ENCODE measurements at regions of chr5 and their contacts with region 1.

Region 1: DNA sequence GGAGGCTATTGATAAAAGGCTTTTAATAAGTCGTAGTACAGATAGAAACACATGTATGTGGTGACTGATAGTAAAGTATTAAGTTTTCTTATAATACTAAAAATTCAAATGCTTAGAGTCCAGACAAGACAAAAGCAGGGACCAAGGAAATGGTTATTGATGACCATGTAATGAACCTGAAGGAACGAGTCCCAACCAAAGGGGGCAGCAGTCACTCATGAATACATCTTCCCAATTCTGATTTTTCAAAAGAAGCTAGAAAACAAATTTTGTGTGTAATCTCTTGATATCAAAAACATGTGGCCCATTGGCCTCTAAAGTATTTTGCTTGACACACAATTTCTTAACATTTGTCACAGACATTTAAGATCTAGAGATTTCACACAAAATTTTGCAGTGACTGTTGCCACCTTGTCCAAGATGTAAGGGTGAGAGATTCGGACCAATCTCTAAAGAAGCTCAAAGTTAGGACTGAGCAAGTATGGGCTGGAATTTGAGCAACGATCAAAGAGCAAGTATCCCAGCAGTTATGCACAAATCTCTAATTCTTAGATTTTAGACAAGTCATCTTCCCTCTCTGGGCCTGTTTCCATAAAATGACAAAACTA is 66.8 kb downstream of the ARL15 start:
- DNase-seq: peak; percentile 52
- H3K4me3 Mint-ChIP-seq: no peak overlapping the region
- H3K27ac Mint-ChIP-seq: no peak overlapping the region
- H3K4me1 Mint-ChIP-seq: peaks cover 12% of the 10 kb centered on the region
- H3K27me3 Mint-ChIP-seq: no peaks in the 10 kb centered on the region

Region 2: GRCh38 chr5:54254482-54255198 is 11.1 kb after region 1 on chr5:
- CTCF ChIA-PET with region 1: interaction called, 12 read pairs
- intact Hi-C with region 1: no loop called
- DNase-seq: no peak
- H3K4me3 Mint-ChIP-seq: no peak overlapping the region
- H3K27ac Mint-ChIP-seq: no peak overlapping the region
- H3K4me1 Mint-ChIP-seq: peaks cover 26% of the 10 kb centered on the region
- H3K27me3 Mint-ChIP-seq: no peaks in the 10 kb centered on the region

Region 3: DNA sequence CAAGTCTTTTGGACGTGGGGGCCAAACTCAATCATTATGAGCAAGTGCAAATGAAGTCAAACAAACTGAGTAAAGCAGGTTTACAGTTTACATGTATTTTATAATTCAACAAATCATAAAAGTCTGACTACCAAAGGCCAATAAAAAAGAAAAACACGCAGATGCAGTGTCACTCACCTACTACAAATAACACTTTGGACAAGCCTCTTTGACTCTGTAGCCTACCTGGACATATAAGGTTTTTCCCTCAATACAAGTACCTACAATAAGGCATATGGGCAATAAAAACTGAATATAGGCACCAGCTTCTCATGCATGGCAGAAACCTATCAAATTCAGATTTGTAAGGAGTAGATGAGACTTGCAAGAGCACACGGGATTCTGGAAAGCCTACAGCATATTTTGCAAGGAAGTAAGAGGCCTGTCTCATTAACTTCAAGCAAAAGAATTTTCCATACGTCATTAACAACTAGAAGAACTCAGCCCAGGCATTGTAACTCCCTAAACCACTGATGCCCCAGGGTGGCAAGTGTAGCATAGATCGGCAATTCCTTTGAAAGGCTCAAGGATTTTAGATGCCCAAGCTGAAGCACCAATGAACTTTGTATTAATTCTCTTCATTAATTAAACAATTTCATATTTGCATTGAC is 45.1 kb after region 1 on chr5:
- CTCF ChIA-PET with region 1: no interaction called
- intact Hi-C with region 1: no loop called
- DNase-seq: no peak
- H3K4me3 Mint-ChIP-seq: no peak overlapping the region
- H3K27ac Mint-ChIP-seq: no peak overlapping the region
- H3K4me1 Mint-ChIP-seq: peaks cover 2% of the 10 kb centered on the region
- H3K27me3 Mint-ChIP-seq: no peaks in the 10 kb centered on the region

Region 4: DNA sequence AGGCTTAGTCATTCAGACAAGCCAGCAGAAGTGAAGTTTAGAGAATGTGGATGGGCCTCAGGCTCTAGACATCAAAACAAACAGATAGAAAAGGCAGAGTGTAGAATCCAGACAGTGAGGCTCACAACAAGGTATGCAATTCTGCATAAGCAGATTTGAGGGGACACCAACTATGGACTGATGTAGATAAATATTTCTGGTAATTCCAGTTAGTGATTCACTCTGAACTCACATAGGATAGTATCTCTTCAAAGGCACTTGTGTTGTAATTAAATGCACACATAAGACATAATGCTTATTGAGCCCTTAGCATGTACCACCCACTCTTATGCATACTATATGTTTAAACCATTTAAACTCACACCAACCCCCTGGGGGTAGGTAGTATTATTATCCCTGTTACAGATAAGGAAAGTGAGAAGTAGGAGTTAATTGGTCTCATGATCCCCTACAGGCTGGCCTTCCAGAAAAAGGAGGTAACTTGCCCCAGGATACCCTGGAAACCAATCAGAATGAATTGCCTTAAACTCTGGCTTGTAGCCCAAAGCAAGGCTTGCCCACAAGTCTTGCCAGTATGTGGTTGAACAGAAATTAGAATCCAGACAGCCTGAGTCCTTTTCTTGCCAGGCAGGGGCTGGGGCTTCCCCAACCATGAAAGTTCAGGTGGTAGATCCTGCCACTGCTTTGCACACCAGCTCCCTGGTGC is 172.5 kb after region 1 on chr5:
- CTCF ChIA-PET with region 1: interaction called, 8 read pairs
- intact Hi-C with region 1: loop called (anchors 1 kb)
- DNase-seq: peak; percentile 8
- H3K4me3 Mint-ChIP-seq: no peak overlapping the region
- H3K27ac Mint-ChIP-seq: no peak overlapping the region
- H3K4me1 Mint-ChIP-seq: no peaks in the 10 kb centered on the region
- H3K27me3 Mint-ChIP-seq: peaks cover 2% of the 10 kb centered on the region

Region 5: DNA sequence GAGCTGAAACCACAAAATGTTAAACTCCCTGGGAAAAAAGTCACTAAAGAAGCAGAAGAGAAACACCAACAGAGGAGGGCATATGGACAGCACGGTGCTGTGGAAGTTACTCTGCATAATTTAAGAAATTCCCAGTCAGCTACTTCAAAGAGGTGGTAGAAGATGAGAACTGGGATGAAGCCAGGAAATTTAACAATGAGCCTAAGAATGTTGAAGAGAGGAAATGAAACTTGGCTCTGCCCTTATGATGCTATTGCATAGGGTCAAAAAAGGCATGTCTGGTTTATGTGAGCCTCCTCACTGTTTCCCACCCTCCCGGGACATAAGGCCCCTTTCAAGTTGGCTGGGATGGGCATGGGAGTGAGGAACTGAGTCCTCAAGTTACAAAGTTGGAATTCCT is 248.6 kb after region 1 on chr5:
- CTCF ChIA-PET with region 1: interaction called, 9 read pairs
- intact Hi-C with region 1: loop called (anchors 1 kb)
- DNase-seq: no peak
- H3K4me3 Mint-ChIP-seq: no peak overlapping the region
- H3K27ac Mint-ChIP-seq: no peak overlapping the region
- H3K4me1 Mint-ChIP-seq: no peaks in the 10 kb centered on the region
- H3K27me3 Mint-ChIP-seq: no peaks in the 10 kb centered on the region

Region 6: GRCh38 chr5:54713923-54714581 is 470.5 kb after region 1 on chr5:
- CTCF ChIA-PET with region 1: no interaction called
- intact Hi-C with region 1: no loop called
- DNase-seq: no peak
- H3K4me3 Mint-ChIP-seq: no peak overlapping the region
- H3K27ac Mint-ChIP-seq: no peak overlapping the region
- H3K4me1 Mint-ChIP-seq: peaks cover 7% of the 10 kb centered on the region
- H3K27me3 Mint-ChIP-seq: no peaks in the 10 kb centered on the region

Region 7: GRCh38 chr5:54844905-54845566 is 601.5 kb after region 1 on chr5:
- CTCF ChIA-PET with region 1: no interaction called
- intact Hi-C with region 1: loop called (anchors 5 kb)
- DNase-seq: no peak
- H3K4me3 Mint-ChIP-seq: no peak overlapping the region
- H3K27ac Mint-ChIP-seq: no peak overlapping the region
- H3K4me1 Mint-ChIP-seq: peaks cover 3% of the 10 kb centered on the region
- H3K27me3 Mint-ChIP-seq: peaks cover 7% of the 10 kb centered on the region

Region 8: GRCh38 chr5:54867310-54867944 is 623.9 kb after region 1 on chr5:
- CTCF ChIA-PET with region 1: interaction called, 3 read pairs
- intact Hi-C with region 1: loop called (anchors 5 kb)
- DNase-seq: no peak
- H3K4me3 Mint-ChIP-seq: no peak overlapping the region
- H3K27ac Mint-ChIP-seq: no peak overlapping the region
- H3K4me1 Mint-ChIP-seq: peaks cover 16% of the 10 kb centered on the region
- H3K27me3 Mint-ChIP-seq: peaks cover 11% of the 10 kb centered on the region